Common myeloid progenitor, CD34-positive (primary cell): ENCODE measurements at regions of chr16 and their contacts with region 1.

Region 1: DNA sequence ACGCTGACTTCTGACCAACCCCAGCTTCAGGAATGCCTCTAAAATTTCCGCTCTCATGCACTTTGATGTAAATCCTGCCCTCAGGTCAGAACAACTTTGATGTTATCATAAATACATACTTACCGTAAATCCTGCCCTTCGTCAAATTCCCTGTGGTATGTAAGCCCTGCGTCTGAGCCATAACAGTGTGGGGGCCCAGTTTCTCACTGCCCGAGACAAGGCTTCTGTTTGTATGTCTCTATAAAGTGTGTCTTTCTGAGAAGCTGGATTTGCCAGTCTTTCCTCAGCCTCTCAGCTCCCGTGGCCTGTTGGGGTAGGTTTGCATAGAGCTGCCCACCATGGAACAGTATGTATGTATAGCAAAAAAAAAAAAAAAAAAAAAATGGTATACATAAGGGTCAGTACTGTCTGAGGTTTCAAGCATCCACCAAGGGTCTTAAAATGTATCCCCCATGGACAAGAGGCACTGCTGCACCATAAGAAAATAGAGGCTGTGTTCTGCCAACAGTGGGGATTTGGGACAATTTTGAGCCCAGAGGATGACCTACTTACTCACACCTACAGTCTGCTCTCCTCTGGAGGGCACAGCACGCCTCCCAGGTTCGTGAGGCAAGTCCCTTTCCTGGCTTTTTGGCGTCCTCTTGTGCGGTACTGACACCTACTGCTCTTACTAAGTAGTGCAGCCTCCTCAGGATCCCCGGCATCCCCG is 17.5 kb downstream of the PRMT7 start:
- DNase-seq: peak; percentile 87 to 93 (median 91)
- H3K4me3 ChIP-seq: no peak overlapping the region
- H3K27ac ChIP-seq: no peak overlapping the region
- H3K4me1 ChIP-seq: peaks cover 5 to 28% (median 22%) of the 10 kb centered on the region in 4 experiments
- H3K27me3 ChIP-seq: no peaks in the 10 kb centered on the region

Region 2: GRCh38 chr16:68237243-68238028 is 90.9 kb before region 1 on chr16:
- CTCF ChIA-PET with region 1: interaction called, 72 read pairs
- POLR2A ChIA-PET with region 1: no interaction called
- DNase-seq: peak; percentile 85 to 91 (median 91)
- H3K4me3 ChIP-seq: peak overlapping the region; percentile 56 to 86 (median 67)
- H3K27ac ChIP-seq: no peak overlapping the region
- H3K4me1 ChIP-seq: peaks cover 0 to 45% (median 41%) of the 10 kb centered on the region in 4 experiments
- H3K27me3 ChIP-seq: peaks cover 0 to 15% (median 8%) of the 10 kb centered on the region in 5 experiments

Region 3: GRCh38 chr16:68244903-68245853 is 83.1 kb before region 1 on chr16 and contains the start of gene PLA2G15:
- CTCF ChIA-PET with region 1: interaction called, 72 read pairs
- POLR2A ChIA-PET with region 1: interaction called, 3 read pairs
- DNase-seq: peak; percentile 93 to 97 (median 96)
- H3K4me3 ChIP-seq: peak within 1 kb of the TSS; percentile 69 to 99 (median 92)
- H3K27ac ChIP-seq: peak within 1 kb of the TSS in 1 of 2 experiments; percentile 66
- H3K4me1 ChIP-seq: peaks cover 4 to 39% (median 34%) of the 10 kb centered on the region in 4 experiments
- H3K27me3 ChIP-seq: no peaks in the 10 kb centered on the region

Region 4: DNA sequence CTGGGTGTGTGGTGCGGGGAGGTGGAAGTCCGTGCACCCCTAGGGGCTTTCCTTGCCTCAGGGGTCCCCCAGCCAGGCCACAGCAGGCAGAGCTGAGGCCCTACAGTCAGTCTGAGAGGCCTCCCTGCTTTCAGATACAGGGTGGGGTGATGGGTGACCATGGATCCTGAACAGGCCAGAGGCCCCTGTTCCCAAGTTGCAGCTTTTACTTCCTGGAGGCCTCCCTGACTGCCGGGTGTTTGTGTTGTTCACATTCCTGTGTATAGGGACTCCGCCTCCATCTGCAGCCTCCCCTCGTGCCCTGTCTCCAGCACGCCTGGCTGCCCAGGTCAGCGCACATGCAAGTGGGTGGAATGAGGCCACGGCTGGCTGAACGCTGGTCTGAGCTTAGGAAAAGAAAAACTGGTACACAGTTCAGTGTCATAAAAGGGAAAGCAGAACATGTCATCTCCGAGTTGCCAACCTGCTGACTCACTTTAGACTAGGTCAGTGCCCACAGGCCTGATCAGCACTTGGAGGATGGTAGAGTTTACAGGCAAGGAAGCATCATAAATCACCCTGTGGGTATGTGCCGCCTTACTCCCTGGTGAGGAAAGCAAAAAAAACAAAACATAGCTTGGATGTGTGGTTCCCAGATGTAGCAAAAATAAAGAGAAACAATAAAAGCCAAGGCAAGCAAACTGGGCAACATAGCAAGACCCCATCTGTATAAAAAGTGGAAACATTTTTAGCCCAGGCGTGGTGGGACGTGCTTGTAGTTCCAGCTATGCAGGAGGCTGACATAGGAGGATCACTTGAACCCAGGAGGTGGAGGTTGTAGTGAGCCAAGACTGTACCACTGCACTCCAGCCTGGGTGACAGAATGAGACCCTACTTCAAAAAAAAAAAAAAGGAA is 70.2 kb before region 1 on chr16:
- CTCF ChIA-PET with region 1: interaction called, 262 read pairs
- POLR2A ChIA-PET with region 1: no interaction called
- DNase-seq: peak; percentile 90 to 99 (median 98)
- H3K4me3 ChIP-seq: peak overlapping the region in 5 of 7 experiments; percentile 17 to 44 (median 26)
- H3K27ac ChIP-seq: peak overlapping the region; percentile 59 to 84
- H3K4me1 ChIP-seq: peaks cover 0 to 48% (median 35%) of the 10 kb centered on the region in 4 experiments
- H3K27me3 ChIP-seq: no peaks in the 10 kb centered on the region

Region 5: GRCh38 chr16:68310761-68311511 is 17.4 kb before region 1 on chr16 and contains the starts of genes PRMT7 and SLC7A6OS:
- CTCF ChIA-PET with region 1: interaction called, 30 read pairs
- POLR2A ChIA-PET with region 1: no interaction called
- DNase-seq: peak; percentile 92 to 97 (median 96)
- H3K4me3 ChIP-seq: peak within 1 kb of the TSS; percentile 77 to 99 (median 94)
- H3K27ac ChIP-seq: peak within 1 kb of the TSS; percentile 64 to 85
- H3K4me1 ChIP-seq: peaks cover 5 to 33% (median 26%) of the 10 kb centered on the region in 4 experiments
- H3K27me3 ChIP-seq: no peaks in the 10 kb centered on the region

Region 6: GRCh38 chr16:68406451-68407152 is 78.3 kb after region 1 on chr16:
- CTCF ChIA-PET with region 1: no interaction called
- POLR2A ChIA-PET with region 1: no interaction called
- DNase-seq: no peak
- H3K4me3 ChIP-seq: no peak overlapping the region
- H3K27ac ChIP-seq: no peak overlapping the region
- H3K4me1 ChIP-seq: no peaks in the 10 kb centered on the region
- H3K27me3 ChIP-seq: no peaks in the 10 kb centered on the region